Psoas muscle (tissue), 8 donors: ENCODE measurements at regions of chr17 and their contacts with region 1.

Region 1: DNA sequence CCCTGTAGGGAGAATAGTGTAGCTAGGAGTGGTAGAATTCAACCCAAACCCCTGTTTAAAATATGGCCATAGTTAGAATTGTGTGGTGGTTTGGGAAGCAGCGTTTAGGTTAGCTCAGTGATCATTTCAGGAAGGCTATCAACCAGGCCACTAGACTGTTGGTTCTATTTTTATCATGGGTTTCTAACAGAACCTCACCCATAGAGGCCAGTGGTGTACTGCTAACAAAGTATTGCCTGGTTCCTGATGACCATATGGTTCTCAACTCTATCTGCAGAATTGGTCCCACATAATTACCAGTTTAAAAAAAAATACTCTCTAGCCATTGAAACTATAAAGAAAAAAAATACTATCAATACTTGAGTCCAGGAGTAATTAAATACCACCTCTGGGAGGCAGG is 70.5 kb upstream of the RASL10B start:
- DNase-seq: no peak
- ATAC-seq: peak; percentile 90 to 97 (median 94)
- H3K4me3 ChIP-seq: no peak overlapping the region
- H3K27ac ChIP-seq: peak overlapping the region; percentile 62
- H3K4me1 ChIP-seq: peaks cover 23% of the 10 kb centered on the region
- H3K27me3 ChIP-seq: no peaks in the 10 kb centered on the region
- CTCF ChIP-seq: peak; percentile 40

Region 2: DNA sequence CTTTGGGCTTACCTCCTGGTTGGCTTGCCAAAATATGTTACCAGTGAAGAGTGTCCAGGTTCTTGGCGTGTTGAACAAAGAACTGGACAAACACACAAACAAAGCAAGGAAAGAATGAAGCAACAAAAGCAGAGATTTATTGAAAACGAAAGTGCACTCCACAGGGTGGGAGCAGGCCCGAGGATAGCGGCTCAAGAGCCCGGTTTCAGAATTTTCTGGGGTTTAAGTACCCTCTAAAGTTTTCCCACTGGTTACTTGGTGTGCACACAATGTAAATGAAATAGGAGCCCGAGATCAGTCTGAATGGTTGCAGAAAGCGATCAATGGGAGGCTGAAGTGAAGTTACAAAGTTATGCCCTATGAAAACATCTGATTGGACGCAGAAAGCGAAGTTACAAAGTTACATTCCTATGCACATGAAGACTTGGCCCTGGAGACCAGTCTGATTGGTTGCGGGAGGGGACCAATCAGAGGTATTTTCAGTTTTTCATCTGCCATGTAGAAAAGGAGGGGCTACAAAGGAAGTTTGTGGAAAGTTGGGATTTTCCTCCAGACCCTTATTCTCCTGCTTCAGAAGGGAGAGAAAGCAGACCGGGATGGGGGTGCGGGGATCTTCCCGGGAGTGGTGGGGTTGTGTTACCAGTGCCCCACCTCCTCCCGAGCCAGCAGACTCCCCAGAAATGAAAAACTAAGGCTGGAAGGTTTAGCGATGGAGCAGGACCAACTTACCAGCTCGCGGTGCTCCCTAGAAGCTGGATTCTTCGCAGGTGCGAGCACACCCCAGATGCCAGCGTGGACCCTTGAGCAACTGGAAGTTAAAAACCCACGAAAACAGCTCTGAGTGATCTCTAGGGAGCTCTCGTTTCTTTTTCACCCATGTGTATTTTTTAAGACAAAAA is 228.5 kb before region 1 on chr17 and contains the start of gene SLFN12:
- intact Hi-C with region 1: no loop called
- DNase-seq: peak; percentile 49 to 57
- ATAC-seq: peak; percentile 47 to 89 (median 81)
- H3K4me3 ChIP-seq: peak within 1 kb of the TSS; percentile 70
- H3K27ac ChIP-seq: peak within 1 kb of the TSS; percentile 71
- H3K4me1 ChIP-seq: no peaks in the 10 kb centered on the region
- H3K27me3 ChIP-seq: peaks cover 2 to 22% (median 2%) of the 10 kb centered on the region in 3 donors
- CTCF ChIP-seq: no peak
- total RNA-seq, gene SLFN12: 1.3 to 3.8 (median 1.9) TPM

Region 3: GRCh38 chr17:35627417-35627816 is 33.5 kb before region 1 on chr17:
- intact Hi-C with region 1: loop called in 1 of 2 experiments (anchors 5 kb)
- DNase-seq: no peak
- ATAC-seq: no peak
- H3K4me3 ChIP-seq: no peak overlapping the region
- H3K27ac ChIP-seq: no peak overlapping the region
- H3K4me1 ChIP-seq: peaks cover 6% of the 10 kb centered on the region
- H3K27me3 ChIP-seq: no peaks in the 10 kb centered on the region
- CTCF ChIP-seq: no peak

Region 4: DNA sequence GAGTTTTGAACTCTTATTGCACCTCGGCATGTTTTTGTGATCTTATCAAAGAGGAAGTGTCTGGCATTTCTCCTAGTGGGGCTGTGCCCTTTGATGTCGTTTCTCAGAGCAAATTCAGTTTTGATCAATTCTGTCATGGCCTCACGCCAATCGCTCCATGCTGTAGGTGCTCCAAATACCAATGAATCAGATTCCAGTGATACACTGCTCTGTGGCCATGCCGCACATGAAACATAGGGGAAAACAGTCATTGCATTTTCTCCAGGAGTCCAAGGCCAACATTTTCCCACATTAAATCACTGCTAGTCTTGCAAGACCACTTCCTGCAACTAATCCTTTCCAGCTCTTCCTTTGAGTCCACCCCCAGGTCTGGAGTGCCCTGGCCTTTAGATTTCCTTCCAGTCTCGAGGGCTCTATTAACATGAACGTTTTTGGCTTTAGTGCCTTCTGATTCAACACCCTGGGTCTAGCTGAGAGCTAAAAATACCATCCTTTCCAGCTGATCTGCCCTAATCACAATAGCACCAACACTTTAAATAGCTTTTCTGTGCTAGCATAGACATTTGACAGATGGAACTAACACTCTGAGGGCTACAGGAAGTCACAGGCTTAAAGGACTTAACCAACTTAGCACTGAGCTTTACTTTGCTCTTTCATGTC is 52.3 kb after region 1 on chr17:
- intact Hi-C with region 1: loop called in 1 of 2 experiments (anchors 5 kb)
- DNase-seq: peak in 1 of 2 donors; percentile 16
- ATAC-seq: peak; percentile 87 to 92 (median 92)
- H3K4me3 ChIP-seq: no peak overlapping the region
- H3K27ac ChIP-seq: peak overlapping the region; percentile 80
- H3K4me1 ChIP-seq: peaks cover 67% of the 10 kb centered on the region
- H3K27me3 ChIP-seq: no peaks in the 10 kb centered on the region
- CTCF ChIP-seq: no peak